Caco-2 (cell line): ENCODE measurements at regions of chr4 and their contacts with region 1.

Region 1: GRCh38 chr4:48506711-48507110 is 16.7 kb downstream of the ZAR1 start:
- DNase-seq: no peak
- H3K4me3 ChIP-seq: no peak overlapping the region
- H3K4me3 Mint-ChIP-seq: no peak overlapping the region
- H3K27ac Mint-ChIP-seq: no peak overlapping the region
- H3K4me1 ChIP-seq: peaks cover 18% of the 10 kb centered on the region
- H3K4me1 Mint-ChIP-seq: no peaks in the 10 kb centered on the region
- H3K27me3 ChIP-seq: no peaks in the 10 kb centered on the region
- H3K27me3 Mint-ChIP-seq: no peaks in the 10 kb centered on the region
- CTCF ChIP-seq: no peak

Region 2: GRCh38 chr4:48546336-48546735 is 39.6 kb after region 1 on chr4:
- CTCF ChIA-PET with region 1: no interaction called
- POLR2A ChIA-PET with region 1: no interaction called
- intact Hi-C with region 1: loop called (anchors 1 kb)
- DNase-seq: peak; percentile 40 to 43
- H3K4me3 ChIP-seq: no peak overlapping the region
- H3K4me3 Mint-ChIP-seq: no peak overlapping the region
- H3K27ac Mint-ChIP-seq: no peak overlapping the region
- H3K4me1 ChIP-seq: no peaks in the 10 kb centered on the region
- H3K4me1 Mint-ChIP-seq: no peaks in the 10 kb centered on the region
- H3K27me3 ChIP-seq: no peaks in the 10 kb centered on the region
- H3K27me3 Mint-ChIP-seq: no peaks in the 10 kb centered on the region
- CTCF ChIP-seq: peak; percentile 66 to 73